ENCODE measurements at regions of chr6 and their contacts with region 1.

Region 1: GRCh38 chr6:41787219-41787917 is at the start of gene TOMM6:
- DNase-seq: peak; percentile 88

Region 2: DNA sequence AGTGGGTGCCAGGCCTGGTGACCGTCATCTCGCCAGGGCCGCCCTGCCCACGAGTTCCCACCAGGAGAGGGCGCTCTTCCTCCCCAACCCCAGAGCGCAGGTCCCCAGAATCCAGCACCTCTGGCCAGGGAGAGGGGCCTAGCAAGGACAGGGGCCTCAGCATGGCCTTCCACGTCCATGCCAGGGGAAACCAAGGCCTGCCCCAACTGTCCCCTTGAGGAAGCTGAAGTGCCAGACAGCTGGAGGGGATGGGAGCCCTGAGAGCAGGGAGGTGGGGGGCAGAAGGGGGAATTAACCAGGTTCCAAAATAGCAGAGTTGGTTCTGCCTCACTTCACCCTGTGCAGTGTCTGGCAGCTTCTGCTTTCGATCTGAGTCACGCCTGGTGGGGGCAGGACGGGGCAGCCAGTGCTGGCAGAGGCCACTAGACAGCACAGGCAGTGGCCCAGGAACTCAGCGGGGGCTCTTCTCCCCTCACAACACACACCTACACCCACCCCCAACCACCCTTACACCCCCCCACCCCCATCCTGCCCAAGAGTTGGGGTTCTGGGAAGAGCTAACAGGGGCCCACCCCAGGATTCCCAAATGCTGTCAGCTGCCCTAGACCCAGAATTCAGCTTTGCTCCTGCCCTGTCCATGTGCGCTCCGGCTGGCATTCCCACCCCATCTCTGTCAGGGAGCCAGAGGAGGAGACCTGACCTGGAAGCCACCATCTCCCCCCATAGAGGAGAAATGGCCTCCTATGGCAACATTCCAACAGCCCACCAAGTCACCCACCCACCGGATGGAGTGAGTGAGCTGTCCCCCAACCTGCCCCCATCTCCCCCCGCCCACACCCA is 81.2 kb before region 1 on chr6:
- CTCF ChIA-PET with region 1: interaction called, 11 read pairs
- POLR2A ChIA-PET with region 1: interaction called, 4 read pairs
- DNase-seq: peak; percentile 85

Region 3: DNA sequence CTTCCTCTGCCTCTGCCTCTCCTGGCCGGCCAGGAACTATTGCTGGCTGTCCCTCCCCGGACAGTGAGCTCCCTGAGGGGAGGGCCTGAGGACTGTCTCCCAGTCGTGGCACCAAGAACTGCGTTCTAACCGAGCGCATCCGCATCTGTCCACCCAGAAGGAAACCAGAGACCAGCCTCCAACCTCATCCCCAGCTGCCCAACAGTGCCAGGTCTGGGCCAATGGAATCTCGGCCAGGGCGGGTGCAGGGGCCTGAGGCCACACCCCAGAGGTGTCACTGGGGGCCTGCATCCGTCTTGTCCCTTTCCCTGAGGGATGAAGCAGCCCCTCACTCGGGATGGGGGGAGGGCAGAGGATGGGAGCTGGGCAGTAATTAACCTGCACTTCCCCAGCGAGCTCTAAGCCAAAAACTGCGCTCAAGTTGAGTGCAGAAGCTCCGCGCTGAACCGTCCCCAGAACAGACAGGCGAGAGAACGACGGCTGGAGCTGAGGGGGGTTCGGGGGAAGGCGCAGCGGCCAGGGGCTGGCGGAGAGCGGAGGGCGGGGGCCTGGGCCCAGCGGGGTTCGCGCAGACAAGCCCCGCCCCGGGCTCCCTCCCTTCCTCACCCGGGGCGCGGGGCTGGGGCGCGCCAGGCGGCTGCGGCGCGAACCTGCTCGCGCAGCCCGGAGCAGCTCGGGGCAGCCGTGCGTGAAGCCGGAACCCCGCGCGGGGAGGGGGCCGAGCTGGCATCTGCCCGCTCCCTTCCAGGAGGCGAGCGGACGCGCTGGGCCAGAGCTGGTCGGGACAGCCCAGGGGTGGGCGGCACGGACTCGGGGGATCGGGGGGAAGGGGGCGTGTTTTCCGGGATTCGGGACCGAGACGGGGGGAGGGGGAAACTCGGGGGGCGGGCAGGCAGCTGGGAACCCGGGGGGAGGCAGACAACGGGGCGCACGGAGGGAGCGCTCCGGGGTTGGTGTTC is 53.4 kb before region 1 on chr6:
- CTCF ChIA-PET with region 1: interaction called, 8 read pairs
- POLR2A ChIA-PET with region 1: interaction called, 14 read pairs
- DNase-seq: peak; percentile 62

Region 4: GRCh38 chr6:41767156-41767833 is 20.1 kb before region 1 on chr6:
- CTCF ChIA-PET with region 1: no interaction called
- POLR2A ChIA-PET with region 1: interaction called, 14 read pairs
- DNase-seq: peak; percentile 80

Region 5: GRCh38 chr6:41859356-41859755 is 72.0 kb after region 1 on chr6:
- CTCF ChIA-PET with region 1: no interaction called
- POLR2A ChIA-PET with region 1: no interaction called
- DNase-seq: no peak

Region 6: GRCh38 chr6:41920921-41921711 is 133.7 kb after region 1 on chr6 and contains the starts of genes BYSL and MED20:
- CTCF ChIA-PET with region 1: interaction called, 18 read pairs
- POLR2A ChIA-PET with region 1: interaction called, 15 read pairs
- DNase-seq: peak; percentile 92

Region 7: GRCh38 chr6:42043787-42044475 is 256.6 kb after region 1 on chr6:
- CTCF ChIA-PET with region 1: interaction called, 37 read pairs
- POLR2A ChIA-PET with region 1: interaction called, 14 read pairs
- DNase-seq: peak; percentile 84

Region 8: GRCh38 chr6:42050266-42051032 is 263.1 kb after region 1 on chr6 and contains the start of gene TAF8:
- CTCF ChIA-PET with region 1: interaction called, 37 read pairs
- POLR2A ChIA-PET with region 1: interaction called, 14 read pairs
- DNase-seq: peak; percentile 89